Activated CD4-positive, alpha-beta T cell treated with anti-CD3 and anti-CD28 coated beads for 36 hours (primary cell): ENCODE measurements at regions of chr3 and their contacts with region 1.

Region 1: GRCh38 chr3:47989981-47990440 is 26.2 kb downstream of the MAP4 start:
- DNase-seq: peak; percentile 84
- ATAC-seq: peak; percentile 99
- H3K4me3 Mint-ChIP-seq: no peak overlapping the region
- H3K27ac Mint-ChIP-seq: no peak overlapping the region
- H3K4me1 Mint-ChIP-seq: peaks cover 10% of the 10 kb centered on the region
- H3K27me3 Mint-ChIP-seq: no peaks in the 10 kb centered on the region

Region 2: DNA sequence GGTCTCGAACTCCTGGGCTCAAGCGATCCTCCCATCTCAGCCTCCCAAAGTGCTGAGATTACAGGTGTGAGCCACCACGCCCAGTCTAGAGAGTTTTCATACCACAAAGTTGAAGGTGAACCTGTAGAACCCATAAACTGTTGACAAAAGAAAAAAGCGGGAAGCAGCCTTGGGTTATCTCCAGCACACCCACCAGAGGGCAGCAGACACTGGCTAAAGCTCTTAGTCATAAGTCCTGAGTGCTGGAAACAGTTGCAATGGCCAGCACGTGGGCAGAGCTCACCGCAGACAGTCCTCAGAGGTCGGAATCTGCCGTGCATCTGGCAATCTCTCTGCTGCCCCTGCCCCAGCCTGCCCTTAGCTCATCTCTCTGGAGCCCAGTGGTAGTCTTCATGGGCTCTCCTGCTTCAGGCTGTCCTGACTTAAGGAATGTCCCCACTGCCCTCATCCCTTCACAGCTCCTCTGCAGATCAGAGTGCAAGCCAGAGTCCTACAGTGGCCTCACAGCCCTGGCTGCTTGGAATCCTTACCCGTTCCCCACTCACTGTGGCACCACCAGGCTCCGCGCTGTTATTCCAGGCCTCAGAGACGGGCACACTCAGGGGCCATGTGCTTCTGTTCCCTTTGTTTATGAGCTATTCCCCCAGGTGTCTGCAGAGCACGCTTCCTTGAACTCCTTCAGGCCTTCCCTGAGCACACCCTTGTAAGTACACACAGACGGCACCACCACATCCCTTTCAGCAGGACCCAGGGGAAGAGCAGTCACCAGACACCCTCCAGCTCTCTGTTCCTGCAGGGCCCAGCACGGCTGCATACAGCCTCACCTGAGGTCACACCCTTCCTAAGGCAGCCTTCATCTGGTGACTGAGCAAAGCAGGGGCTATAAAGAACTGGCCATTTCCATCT is 467.7 kb before region 1 on chr3:
- CTCF ChIA-PET with region 1: no interaction called
- POLR2A ChIA-PET with region 1: no interaction called
- intact Hi-C with region 1: loop called in 1 of 2 experiments (anchors 2 kb)
- DNase-seq: peak; percentile 90
- ATAC-seq: peak; percentile 93
- H3K4me3 Mint-ChIP-seq: no peak overlapping the region
- H3K27ac Mint-ChIP-seq: peak overlapping the region; percentile 32
- H3K4me1 Mint-ChIP-seq: peaks cover 5% of the 10 kb centered on the region
- H3K27me3 Mint-ChIP-seq: no peaks in the 10 kb centered on the region

Region 3: DNA sequence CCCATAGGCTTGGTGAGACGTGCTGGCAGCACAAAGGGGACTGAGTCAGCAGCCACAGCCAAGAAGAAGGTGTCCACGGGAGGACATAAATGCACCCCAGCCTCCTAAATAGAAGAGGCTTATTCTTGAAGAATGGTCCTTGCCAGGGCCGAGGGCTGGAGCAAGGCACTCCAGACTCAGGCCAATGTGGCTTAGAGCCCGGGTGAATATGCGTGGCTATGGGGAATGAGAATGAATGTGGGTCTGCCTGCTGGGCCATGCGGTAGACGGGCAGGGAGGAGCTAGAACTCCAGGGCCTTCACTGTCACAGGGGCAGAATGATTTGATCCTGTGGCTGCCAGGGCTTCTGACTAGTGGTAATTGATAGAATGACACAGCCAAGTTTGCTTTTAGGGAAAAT is 153.0 kb before region 1 on chr3:
- CTCF ChIA-PET with region 1: interaction called, 21 read pairs
- POLR2A ChIA-PET with region 1: no interaction called
- intact Hi-C with region 1: loop called (anchors 1 to 2 kb)
- DNase-seq: no peak
- ATAC-seq: no peak
- H3K4me3 Mint-ChIP-seq: no peak overlapping the region
- H3K27ac Mint-ChIP-seq: no peak overlapping the region
- H3K4me1 Mint-ChIP-seq: no peaks in the 10 kb centered on the region
- H3K27me3 Mint-ChIP-seq: no peaks in the 10 kb centered on the region

Region 4: GRCh38 chr3:47976135-47976732 is 13.8 kb before region 1 on chr3:
- CTCF ChIA-PET with region 1: interaction called, 12 read pairs
- POLR2A ChIA-PET with region 1: no interaction called
- intact Hi-C with region 1: no loop called
- DNase-seq: no peak
- ATAC-seq: no peak
- H3K4me3 Mint-ChIP-seq: no peak overlapping the region
- H3K27ac Mint-ChIP-seq: no peak overlapping the region
- H3K4me1 Mint-ChIP-seq: no peaks in the 10 kb centered on the region
- H3K27me3 Mint-ChIP-seq: no peaks in the 10 kb centered on the region

Region 5: DNA sequence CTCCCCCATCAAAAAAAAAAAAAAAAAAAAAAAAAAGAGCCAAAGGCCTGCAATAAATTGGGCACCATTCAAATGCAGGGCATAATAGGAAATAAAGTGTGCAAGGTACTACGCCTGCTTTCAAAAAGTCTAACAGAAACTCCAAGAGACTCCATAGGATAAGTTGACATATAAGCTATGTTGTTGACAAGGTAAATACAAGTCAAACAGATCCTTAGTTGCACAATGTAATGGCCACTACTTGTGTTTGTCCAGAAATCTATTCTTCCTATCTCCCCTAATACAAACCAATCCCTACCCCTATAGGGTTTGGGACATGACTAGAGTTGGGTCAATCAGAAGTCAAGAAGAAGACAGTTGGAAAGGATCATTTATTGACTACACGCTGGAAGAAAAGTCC is 10.2 kb after region 1 on chr3:
- CTCF ChIA-PET with region 1: interaction called, 21 read pairs
- POLR2A ChIA-PET with region 1: no interaction called
- intact Hi-C with region 1: no loop called
- DNase-seq: no peak
- ATAC-seq: no peak
- H3K4me3 Mint-ChIP-seq: no peak overlapping the region
- H3K27ac Mint-ChIP-seq: no peak overlapping the region
- H3K4me1 Mint-ChIP-seq: peaks cover 10% of the 10 kb centered on the region
- H3K27me3 Mint-ChIP-seq: no peaks in the 10 kb centered on the region

Region 6: DNA sequence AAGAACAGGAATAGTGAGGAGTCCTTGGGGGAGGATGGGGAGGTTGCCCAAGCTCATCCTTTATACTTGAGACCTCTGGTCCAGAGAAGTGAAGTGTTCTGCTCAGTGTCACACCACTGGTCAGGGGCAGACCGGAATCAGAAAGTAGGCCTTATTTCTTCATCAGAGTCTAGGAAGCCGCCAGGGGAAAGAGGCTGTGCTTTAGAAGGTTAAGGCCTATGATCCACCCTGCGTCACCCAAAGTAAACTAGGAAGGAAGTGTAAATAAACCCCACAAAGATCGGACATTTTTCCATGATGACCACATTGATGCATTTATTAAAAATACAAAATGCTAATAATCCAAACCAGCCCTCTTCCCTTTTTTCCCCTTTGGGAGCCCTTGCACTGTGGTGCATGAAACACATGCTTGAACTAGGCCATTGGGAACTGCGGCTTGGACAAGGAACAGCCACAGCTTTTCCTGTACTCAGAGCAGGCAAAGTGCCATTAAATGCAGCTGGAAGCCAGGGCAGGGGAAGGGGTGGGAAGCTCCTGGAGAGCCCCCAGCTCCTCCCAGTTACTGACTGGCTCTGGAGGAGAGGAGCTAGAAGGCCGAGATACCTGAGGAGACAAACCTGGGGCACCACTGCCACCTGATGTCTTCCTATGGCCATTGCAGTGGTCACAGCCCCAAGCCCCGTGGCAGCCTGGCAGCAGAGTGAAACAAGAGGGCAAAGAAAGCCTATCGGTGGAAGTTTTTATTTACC is 161.2 kb after region 1 on chr3:
- CTCF ChIA-PET with region 1: interaction called, 5 read pairs
- POLR2A ChIA-PET with region 1: no interaction called
- intact Hi-C with region 1: loop called in 1 of 2 experiments (anchors 1 kb)
- DNase-seq: peak; percentile 81
- ATAC-seq: peak; percentile 96
- H3K4me3 Mint-ChIP-seq: no peak overlapping the region
- H3K27ac Mint-ChIP-seq: no peak overlapping the region
- H3K4me1 Mint-ChIP-seq: no peaks in the 10 kb centered on the region
- H3K27me3 Mint-ChIP-seq: no peaks in the 10 kb centered on the region

Region 7: GRCh38 chr3:49133226-49133951 is 1143.4 kb after region 1 on chr3:
- CTCF ChIA-PET with region 1: no interaction called
- POLR2A ChIA-PET with region 1: no interaction called
- intact Hi-C with region 1: no loop called
- DNase-seq: no peak
- ATAC-seq: no peak
- H3K4me3 Mint-ChIP-seq: no peak overlapping the region
- H3K27ac Mint-ChIP-seq: no peak overlapping the region
- H3K4me1 Mint-ChIP-seq: peaks cover 6% of the 10 kb centered on the region
- H3K27me3 Mint-ChIP-seq: peaks cover 17% of the 10 kb centered on the region